ENCODE measurements at regions of chr3 and their contacts with region 1.

Region 1: DNA sequence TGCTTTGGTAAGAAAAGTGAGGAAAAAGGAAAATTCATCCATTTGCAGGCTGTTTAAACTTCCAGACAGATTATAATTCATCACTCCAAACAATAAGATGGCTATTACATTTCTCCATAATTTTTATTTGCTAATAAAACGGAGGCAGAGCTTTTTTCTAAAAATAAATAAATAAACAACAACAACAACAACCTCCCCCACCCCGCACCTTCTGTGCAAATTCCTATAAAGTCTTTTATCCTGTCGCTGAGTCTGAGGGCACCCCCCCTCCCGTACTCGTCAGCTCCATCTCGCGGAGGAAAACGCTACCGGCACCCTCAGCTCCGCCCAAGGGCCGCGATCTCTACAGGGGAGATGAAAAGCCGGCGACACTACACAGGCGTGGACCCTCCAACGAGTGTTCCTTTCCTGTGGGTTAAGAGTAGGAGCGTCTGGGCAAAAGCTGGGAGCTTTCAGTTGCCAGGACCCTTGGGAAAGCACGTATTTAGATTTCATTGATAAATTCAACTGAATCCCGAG is 1.0 kb upstream of the ATP1B3 start:
- DNase-seq: peak; percentile 78
- H3K4me3 Mint-ChIP-seq: peak overlapping the region; percentile 92
- H3K27ac Mint-ChIP-seq: peak overlapping the region; percentile 90
- H3K4me1 Mint-ChIP-seq: peaks cover 30% of the 10 kb centered on the region
- H3K27me3 Mint-ChIP-seq: peaks cover 2% of the 10 kb centered on the region

Region 2: GRCh38 chr3:141231101-141231935 is 644.1 kb before region 1 on chr3 and contains the start of gene PXYLP1:
- intact Hi-C with region 1: loop called (anchors 10 kb)
- DNase-seq: peak; percentile 92
- H3K4me3 Mint-ChIP-seq: peak within 1 kb of the TSS; percentile 92
- H3K27ac Mint-ChIP-seq: peak within 1 kb of the TSS; percentile 98
- H3K4me1 Mint-ChIP-seq: peaks cover 54% of the 10 kb centered on the region
- H3K27me3 Mint-ChIP-seq: peaks cover 4% of the 10 kb centered on the region
- total RNA-seq, gene PXYLP1: 11.6 and 12.1 TPM in 2 replicates

Region 3: DNA sequence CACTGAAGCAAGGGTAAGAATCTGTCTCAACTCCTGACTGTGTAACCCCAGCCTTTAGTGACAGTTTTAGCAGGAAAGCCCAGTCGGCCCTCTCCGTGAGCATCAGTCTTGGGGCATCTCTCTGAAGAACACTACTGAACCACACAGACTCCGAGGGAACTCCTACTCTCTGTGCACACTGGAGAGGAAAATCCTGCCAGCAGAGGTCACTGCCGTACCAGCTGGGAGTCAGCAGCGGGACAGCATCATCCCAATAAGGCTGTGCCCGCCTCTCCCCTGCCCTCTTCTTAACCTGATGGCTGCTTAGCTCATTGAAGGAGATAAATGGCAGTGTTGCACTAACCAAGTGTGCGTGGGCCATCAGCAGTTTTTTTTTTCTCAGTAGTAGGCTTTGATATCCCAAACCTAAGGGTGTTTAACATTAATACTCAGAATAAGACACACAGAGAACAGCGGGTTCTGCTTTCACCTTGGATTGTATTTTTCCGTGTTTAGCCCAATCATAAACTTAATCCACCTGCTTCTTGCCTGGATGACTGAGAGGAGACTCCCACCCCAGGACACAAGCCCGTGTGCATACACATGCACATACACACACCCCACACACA is 415.2 kb before region 1 on chr3:
- intact Hi-C with region 1: loop called (anchors 1 kb)
- DNase-seq: peak; percentile 78
- H3K4me3 Mint-ChIP-seq: no peak overlapping the region
- H3K27ac Mint-ChIP-seq: no peak overlapping the region
- H3K4me1 Mint-ChIP-seq: peaks cover 26% of the 10 kb centered on the region
- H3K27me3 Mint-ChIP-seq: no peaks in the 10 kb centered on the region

Region 4: GRCh38 chr3:141544697-141545096 is 330.7 kb before region 1 on chr3:
- intact Hi-C with region 1: loop called (anchors 5 kb)
- DNase-seq: peak; percentile 6
- H3K4me3 Mint-ChIP-seq: peak overlapping the region; percentile 67
- H3K27ac Mint-ChIP-seq: peak overlapping the region; percentile 81
- H3K4me1 Mint-ChIP-seq: peaks cover 60% of the 10 kb centered on the region
- H3K27me3 Mint-ChIP-seq: no peaks in the 10 kb centered on the region

Region 5: DNA sequence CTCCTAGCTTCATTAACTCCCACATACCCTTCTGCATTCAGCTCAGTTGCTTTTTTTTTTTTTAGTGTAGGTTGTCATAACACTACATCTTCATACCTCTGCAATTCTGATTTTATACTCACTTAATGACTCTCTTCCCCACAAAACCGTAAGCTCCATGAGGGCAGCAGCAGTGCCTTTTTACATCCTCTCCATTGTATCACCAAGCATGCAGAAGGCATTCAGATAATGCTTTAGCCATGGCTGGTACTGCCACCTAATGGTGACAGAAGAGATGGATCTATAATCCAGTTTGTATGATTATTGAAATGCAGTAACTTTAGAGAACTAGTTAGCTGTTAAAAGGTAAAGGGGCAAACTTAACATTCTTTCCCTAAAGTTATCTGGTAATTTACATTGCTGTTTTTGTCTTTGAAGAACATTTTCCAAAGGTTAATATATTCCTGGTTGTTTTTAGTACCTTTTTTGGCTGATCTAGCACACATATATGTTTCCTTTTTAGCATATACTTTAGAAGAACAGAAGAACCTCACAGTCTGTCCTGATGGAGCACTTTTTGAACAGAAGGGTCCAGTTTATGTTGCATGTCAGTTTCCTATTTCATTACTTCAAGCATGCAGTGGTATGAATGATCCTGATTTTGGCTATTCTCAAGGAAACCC is 37.8 kb after region 1 on chr3:
- intact Hi-C with region 1: loop called (anchors 1 kb)
- DNase-seq: peak; percentile 26
- H3K4me3 Mint-ChIP-seq: no peak overlapping the region
- H3K27ac Mint-ChIP-seq: no peak overlapping the region
- H3K4me1 Mint-ChIP-seq: peaks cover 4% of the 10 kb centered on the region
- H3K27me3 Mint-ChIP-seq: no peaks in the 10 kb centered on the region

Region 6: GRCh38 chr3:142723968-142724681 is 848.7 kb after region 1 on chr3 and contains the start of gene TRPC1:
- intact Hi-C with region 1: loop called (anchors 10 kb)
- DNase-seq: peak; percentile 73
- H3K4me3 Mint-ChIP-seq: peak within 1 kb of the TSS; percentile 86
- H3K27ac Mint-ChIP-seq: peak within 1 kb of the TSS; percentile 83
- H3K4me1 Mint-ChIP-seq: peaks cover 4% of the 10 kb centered on the region
- H3K27me3 Mint-ChIP-seq: peaks cover 50% of the 10 kb centered on the region
- total RNA-seq, gene TRPC1: 0.66 and 1.1 TPM in 2 replicates

Region 7: GRCh38 chr3:142844339-142844977 is 969.0 kb after region 1 on chr3:
- intact Hi-C with region 1: no loop called
- DNase-seq: no peak
- H3K4me3 Mint-ChIP-seq: no peak overlapping the region
- H3K27ac Mint-ChIP-seq: no peak overlapping the region
- H3K4me1 Mint-ChIP-seq: no peaks in the 10 kb centered on the region
- H3K27me3 Mint-ChIP-seq: peaks cover 14% of the 10 kb centered on the region